ENCODE measurements at regions of chr13 and their contacts with region 1.

Region 1: GRCh38 chr13:73417015-73417623 is 358.3 kb downstream of the KLF5 start:
- DNase-seq: peak; percentile 27
- ATAC-seq: peak; percentile 94
- H3K4me3 ChIP-seq: no peak overlapping the region
- H3K27ac ChIP-seq: no peak overlapping the region
- H3K4me1 ChIP-seq: no peaks in the 10 kb centered on the region
- H3K27me3 ChIP-seq: no peaks in the 10 kb centered on the region
- CTCF ChIP-seq: peak; percentile 61
- EP300 ChIP-seq: no peak
- POLR2A ChIP-seq: no peak
- RAD21 ChIP-seq: no peak

Region 2: DNA sequence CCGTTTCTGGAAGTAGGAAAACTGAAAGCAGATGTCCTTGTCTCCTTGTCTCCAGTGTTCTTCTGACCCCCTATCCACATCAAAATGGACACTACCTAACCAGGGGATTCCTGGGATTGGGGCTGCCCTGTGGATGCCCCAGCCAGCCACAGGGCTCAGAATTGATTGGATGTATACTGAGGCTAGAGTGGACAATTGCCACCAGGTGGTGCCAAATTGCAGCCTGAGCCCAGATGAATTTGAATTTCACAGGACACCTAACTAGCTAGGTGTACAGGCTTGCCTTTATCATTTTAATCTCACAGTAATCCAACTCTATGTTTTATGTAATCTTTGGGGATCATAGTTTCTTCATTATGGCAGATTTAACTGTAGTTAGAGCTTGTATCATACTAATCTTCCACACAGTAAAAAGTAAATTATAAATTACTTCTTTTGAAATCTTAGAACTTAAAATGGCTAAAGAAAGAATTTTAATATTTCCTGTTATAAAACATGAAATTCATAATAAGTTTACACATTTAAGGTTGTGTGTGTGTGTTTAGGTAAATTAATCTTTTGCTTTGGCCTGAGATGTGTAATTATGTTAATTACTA is 577.2 kb before region 1 on chr13:
- CTCF ChIA-PET with region 1: interaction called, 11 read pairs
- POLR2A ChIA-PET with region 1: no interaction called
- in situ Hi-C with region 1: loop called (anchors 10 kb)
- intact Hi-C with region 1: no loop called
- DNase-seq: peak; percentile 56
- ATAC-seq: peak; percentile 100
- H3K4me3 ChIP-seq: no peak overlapping the region
- H3K27ac ChIP-seq: no peak overlapping the region
- H3K4me1 ChIP-seq: no peaks in the 10 kb centered on the region
- H3K27me3 ChIP-seq: no peaks in the 10 kb centered on the region
- CTCF ChIP-seq: peak; percentile 83
- EP300 ChIP-seq: no peak
- POLR2A ChIP-seq: no peak
- RAD21 ChIP-seq: peak; percentile 69